ENCODE measurements at regions of chr1 and their contacts with region 1.

Region 1: DNA sequence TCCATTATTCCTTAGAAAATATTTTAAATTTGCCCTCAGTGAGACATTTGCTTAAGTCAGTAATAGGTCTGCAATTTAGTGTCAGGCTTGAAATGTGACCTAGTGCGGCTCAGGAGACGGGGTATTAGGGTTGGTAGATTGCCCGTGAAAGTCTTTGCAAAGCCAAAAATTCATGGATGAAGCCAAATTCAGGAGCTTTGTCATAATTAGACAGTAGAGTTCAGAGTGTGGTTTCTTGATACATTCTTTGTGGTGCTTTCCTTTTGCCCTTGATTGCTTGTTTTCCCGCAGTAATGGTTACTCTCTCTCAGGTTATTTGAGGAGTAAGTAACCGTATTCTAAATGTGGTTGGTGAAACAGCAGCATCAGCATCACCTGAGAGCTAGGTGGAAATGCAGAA is 120.7 kb downstream of the RPS6KC1 start:
- DNase-seq: no peak
- ATAC-seq: no peak
- H3K4me3 ChIP-seq: no peak overlapping the region
- H3K27ac ChIP-seq: no peak overlapping the region
- H3K4me1 ChIP-seq: 0 out of 5 replicates have a peak, but pooled peaks cover 0 to 5% of the 10 kb centered on the region in 2 experiments
- H3K27me3 ChIP-seq: no peaks in the 10 kb centered on the region
- CTCF ChIP-seq: no peak
- EP300 ChIP-seq: no peak
- POLR2A ChIP-seq: no peak
- RAD21 ChIP-seq: no peak

Region 2: GRCh38 chr1:213122514-213122929 is 49.2 kb before region 1 on chr1:
- CTCF ChIA-PET with region 1: no interaction called
- POLR2A ChIA-PET with region 1: no interaction called
- in situ Hi-C with region 1: no loop called
- intact Hi-C with region 1: no loop called
- DNase-seq: peak; percentile 19 to 77 (median 26)
- ATAC-seq: 0 out of 3 replicates have a peak, but pooled peaks have one; percentile 21
- H3K4me3 ChIP-seq: no peak overlapping the region
- H3K27ac ChIP-seq: peak overlapping the region; percentile 10; the same call in 2 of the 3 replicates
- H3K4me1 ChIP-seq: peaks cover 0 to 31% of the 10 kb centered on the region in 2 experiments
- H3K27me3 ChIP-seq: no peaks in the 10 kb centered on the region
- CTCF ChIP-seq: peak in 2 of 3 experiments; percentile 29 to 70; a peak in 4 of 6 replicates
- EP300 ChIP-seq: no peak
- POLR2A ChIP-seq: no peak
- RAD21 ChIP-seq: peak; percentile 45 to 66

Region 3: GRCh38 chr1:213221209-213221608 is 49.5 kb after region 1 on chr1:
- CTCF ChIA-PET with region 1: no interaction called
- POLR2A ChIA-PET with region 1: no interaction called
- in situ Hi-C with region 1: no loop called
- intact Hi-C with region 1: loop called (anchors 5 kb)
- DNase-seq: no peak
- ATAC-seq: peak; percentile 48
- H3K4me3 ChIP-seq: no peak overlapping the region
- H3K27ac ChIP-seq: no peak overlapping the region
- H3K4me1 ChIP-seq: no peaks in the 10 kb centered on the region
- H3K27me3 ChIP-seq: no peaks in the 10 kb centered on the region
- CTCF ChIP-seq: no peak
- EP300 ChIP-seq: no peak
- POLR2A ChIP-seq: no peak
- RAD21 ChIP-seq: no peak

Measured in K562 (cell line).